ENCODE measurements at regions of chr4 and their contacts with region 1.

Region 1: GRCh38 chr4:78656968-78657445 is 105.4 kb downstream of the ANXA3 start:
- DNase-seq: peak in 3 of 9 experiments; percentile 6 to 24 (median 8)
- ATAC-seq: peak; percentile 26
- H3K4me3 ChIP-seq: no peak overlapping the region
- H3K4me3 Mint-ChIP-seq: peak overlapping the region; percentile 79
- H3K27ac ChIP-seq: no peak overlapping the region
- H3K27ac Mint-ChIP-seq: peak overlapping the region; percentile 80
- H3K4me1 ChIP-seq: peaks cover 24% of the 10 kb centered on the region
- H3K4me1 Mint-ChIP-seq: peaks cover 33% of the 10 kb centered on the region
- H3K27me3 ChIP-seq: no peaks in the 10 kb centered on the region
- H3K27me3 Mint-ChIP-seq: no peaks in the 10 kb centered on the region
- CTCF ChIP-seq: no peak

Region 2: DNA sequence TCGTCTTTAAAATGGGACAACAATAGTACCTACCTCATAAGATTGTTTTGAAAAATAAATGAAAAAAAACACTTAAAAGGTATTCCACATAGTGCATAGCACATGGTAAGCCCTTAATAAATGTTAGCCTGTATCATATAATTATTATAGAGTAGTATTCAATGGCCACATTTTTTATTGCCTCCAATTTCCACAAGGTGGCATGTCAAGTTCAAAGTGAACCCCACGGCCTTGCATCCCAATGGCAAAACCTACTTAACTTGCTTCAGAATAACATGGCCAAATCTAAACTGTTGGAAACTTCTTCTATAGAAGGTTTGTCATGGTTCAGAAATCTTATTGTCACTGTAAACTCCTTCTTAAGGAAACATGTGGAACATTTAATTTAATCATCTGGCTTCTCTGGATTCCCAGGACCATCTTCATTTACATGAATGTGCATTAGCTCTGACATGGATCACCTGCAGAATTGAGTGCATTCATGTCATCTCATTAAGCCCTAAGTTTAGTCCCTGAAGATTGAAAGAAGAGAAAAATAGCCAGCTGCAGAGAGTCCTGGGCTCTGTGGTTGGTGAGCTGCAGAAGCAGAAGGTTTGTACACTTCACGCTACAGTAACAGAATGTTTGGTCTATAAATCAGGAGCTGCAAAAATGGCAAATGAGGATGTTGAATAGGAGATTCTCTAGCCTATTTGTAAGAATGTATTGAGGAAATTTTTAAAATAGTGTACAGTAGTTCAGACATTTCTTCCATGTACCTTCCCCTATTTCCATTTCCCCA is 44.4 kb before region 1 on chr4:
- CTCF ChIA-PET with region 1: no interaction called
- POLR2A ChIA-PET with region 1: no interaction called
- intact Hi-C with region 1: loop called in 1 of 2 experiments (anchors 5 kb)
- DNase-seq: peak in 2 of 9 experiments; percentile 19 to 25
- ATAC-seq: no peak
- H3K4me3 ChIP-seq: no peak overlapping the region
- H3K4me3 Mint-ChIP-seq: no peak overlapping the region
- H3K27ac ChIP-seq: no peak overlapping the region
- H3K27ac Mint-ChIP-seq: no peak overlapping the region
- H3K4me1 ChIP-seq: peaks cover 21% of the 10 kb centered on the region
- H3K4me1 Mint-ChIP-seq: peaks cover 33% of the 10 kb centered on the region
- H3K27me3 ChIP-seq: no peaks in the 10 kb centered on the region
- H3K27me3 Mint-ChIP-seq: no peaks in the 10 kb centered on the region
- CTCF ChIP-seq: no peak

Measured in CD8-positive, alpha-beta T cell (primary cell).